Heart right ventricle (tissue), 16 donors: ENCODE measurements at regions of chr6 and their contacts with region 1.

Region 1: DNA sequence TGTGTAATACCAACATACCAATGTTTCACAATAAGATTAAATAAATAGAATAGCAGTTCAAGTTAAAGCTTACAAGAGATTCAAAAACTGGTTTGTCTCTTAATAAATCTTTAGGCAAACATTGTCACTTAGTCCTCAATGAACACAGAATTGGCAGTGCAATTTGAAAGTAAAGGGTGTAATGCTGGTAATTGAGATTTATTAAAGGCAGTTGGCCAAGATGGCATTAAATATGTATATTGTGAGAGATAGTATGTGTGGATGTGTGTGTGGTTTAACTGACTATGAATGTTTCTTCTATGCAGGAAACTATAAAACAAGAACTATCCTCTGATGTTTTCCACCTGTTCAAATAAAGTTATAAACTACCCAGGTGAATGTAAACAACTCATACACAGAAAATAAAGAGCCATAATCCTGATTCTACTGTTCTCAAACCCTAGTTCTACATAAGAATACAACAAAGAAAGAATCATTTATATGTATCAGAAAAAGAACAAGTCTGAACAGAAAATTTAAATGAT is 267.9 kb upstream of the PTCHD4 start:
- DNase-seq: no peak
- ATAC-seq: no peak
- H3K4me3 ChIP-seq: no peak overlapping the region
- H3K27ac ChIP-seq: no peak overlapping the region
- H3K4me1 ChIP-seq: no peaks in the 10 kb centered on the region
- H3K27me3 ChIP-seq: no peaks in the 10 kb centered on the region
- CTCF ChIP-seq: no peak

Region 2: DNA sequence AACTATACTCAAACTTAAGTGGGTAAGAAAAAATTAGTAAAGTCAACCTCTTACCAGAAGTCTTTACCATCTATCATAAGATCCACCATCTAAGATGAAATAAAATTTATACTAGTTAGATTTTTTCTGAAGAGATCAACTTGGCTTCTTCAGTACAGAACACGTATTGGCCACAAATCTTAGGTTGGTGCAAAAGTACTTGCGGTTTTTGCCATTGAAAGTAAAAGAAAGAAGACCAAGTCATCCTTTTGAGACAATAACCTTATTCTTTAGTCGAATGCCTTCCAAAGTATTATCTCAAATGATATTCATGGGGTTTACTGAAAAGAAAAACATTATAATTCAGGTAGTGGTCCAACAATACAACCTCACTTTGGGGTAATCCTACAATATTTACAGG is 24.6 kb after region 1 on chr6:
- intact Hi-C with region 1: loop called in 1 of 10 experiments (anchors 2 kb)
- DNase-seq: no peak
- ATAC-seq: no peak
- H3K4me3 ChIP-seq: no peak overlapping the region
- H3K27ac ChIP-seq: no peak overlapping the region
- H3K4me1 ChIP-seq: no peaks in the 10 kb centered on the region
- H3K27me3 ChIP-seq: no peaks in the 10 kb centered on the region
- CTCF ChIP-seq: no peak